ENCODE measurements at regions of chr3 and their contacts with region 1.

Region 1: DNA sequence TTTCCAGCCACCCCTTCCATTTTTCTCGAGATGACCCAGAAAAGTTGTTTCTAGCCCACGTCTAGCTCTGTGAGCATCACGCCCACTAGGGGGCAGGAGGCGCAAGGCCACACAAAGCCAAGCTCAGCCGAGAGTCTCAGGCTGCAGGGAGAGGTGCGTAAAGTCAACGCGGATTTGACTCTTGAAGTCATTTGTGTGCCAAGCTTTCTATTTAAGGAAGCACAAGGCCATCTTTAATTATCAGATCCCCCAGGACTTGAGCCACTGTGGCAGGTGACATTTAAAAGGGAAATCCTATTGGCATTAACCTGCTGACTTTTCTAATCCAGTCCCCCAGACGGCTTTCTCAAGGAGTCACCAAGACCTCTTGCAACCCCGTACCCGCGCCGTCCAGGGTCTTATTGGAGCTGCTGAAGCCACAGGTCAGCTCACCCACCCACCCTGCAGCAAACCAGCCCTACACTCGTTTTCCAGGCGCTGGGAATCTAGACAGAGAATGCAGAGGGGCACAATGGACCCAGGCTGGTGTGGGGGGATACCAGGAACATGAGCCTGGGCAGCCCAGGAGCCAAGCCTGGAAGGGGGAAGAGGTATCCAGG is 62.1 kb downstream of the CAPN7 start:
- DNase-seq: peak; percentile 93
- ATAC-seq: peak; percentile 63
- H3K4me3 Mint-ChIP-seq: no peak overlapping the region
- H3K27ac Mint-ChIP-seq: no peak overlapping the region
- H3K4me1 Mint-ChIP-seq: peaks cover 44% of the 10 kb centered on the region
- H3K27me3 Mint-ChIP-seq: peaks cover 7% of the 10 kb centered on the region
- CTCF ChIP-seq: peak; percentile 83

Region 2: DNA sequence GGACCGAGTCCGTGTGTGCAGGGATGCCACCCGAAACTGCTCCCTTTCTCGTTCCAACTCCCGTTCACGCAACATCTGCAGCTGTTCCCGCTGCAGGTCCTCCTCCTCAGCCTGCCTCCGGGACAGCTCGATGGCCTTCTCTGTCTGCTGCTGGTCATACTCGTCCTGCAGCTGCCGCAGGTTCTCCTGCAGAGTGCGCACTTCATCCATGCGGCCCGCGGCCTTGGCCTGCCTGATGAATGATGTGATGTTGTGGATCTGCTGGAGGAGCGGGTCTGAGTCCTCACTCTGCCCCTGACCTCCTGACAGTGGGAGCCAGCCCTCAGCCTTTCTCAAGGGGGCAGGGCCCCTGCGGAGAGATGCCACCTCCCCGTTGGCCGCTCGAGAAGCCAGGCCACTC is 193.6 kb before region 1 on chr3:
- CTCF ChIA-PET with region 1: no interaction called
- POLR2A ChIA-PET with region 1: no interaction called
- intact Hi-C with region 1: no loop called
- DNase-seq: no peak
- ATAC-seq: no peak
- H3K4me3 Mint-ChIP-seq: no peak overlapping the region
- H3K27ac Mint-ChIP-seq: no peak overlapping the region
- H3K4me1 Mint-ChIP-seq: no peaks in the 10 kb centered on the region
- H3K27me3 Mint-ChIP-seq: no peaks in the 10 kb centered on the region
- CTCF ChIP-seq: no peak

Region 3: GRCh38 chr3:15148614-15149013 is 119.5 kb before region 1 on chr3:
- CTCF ChIA-PET with region 1: no interaction called
- POLR2A ChIA-PET with region 1: no interaction called
- intact Hi-C with region 1: no loop called
- DNase-seq: peak; percentile 4
- ATAC-seq: peak; percentile 39
- H3K4me3 Mint-ChIP-seq: no peak overlapping the region
- H3K27ac Mint-ChIP-seq: no peak overlapping the region
- H3K4me1 Mint-ChIP-seq: no peaks in the 10 kb centered on the region
- H3K27me3 Mint-ChIP-seq: peaks cover 15% of the 10 kb centered on the region
- CTCF ChIP-seq: no peak

Region 4: DNA sequence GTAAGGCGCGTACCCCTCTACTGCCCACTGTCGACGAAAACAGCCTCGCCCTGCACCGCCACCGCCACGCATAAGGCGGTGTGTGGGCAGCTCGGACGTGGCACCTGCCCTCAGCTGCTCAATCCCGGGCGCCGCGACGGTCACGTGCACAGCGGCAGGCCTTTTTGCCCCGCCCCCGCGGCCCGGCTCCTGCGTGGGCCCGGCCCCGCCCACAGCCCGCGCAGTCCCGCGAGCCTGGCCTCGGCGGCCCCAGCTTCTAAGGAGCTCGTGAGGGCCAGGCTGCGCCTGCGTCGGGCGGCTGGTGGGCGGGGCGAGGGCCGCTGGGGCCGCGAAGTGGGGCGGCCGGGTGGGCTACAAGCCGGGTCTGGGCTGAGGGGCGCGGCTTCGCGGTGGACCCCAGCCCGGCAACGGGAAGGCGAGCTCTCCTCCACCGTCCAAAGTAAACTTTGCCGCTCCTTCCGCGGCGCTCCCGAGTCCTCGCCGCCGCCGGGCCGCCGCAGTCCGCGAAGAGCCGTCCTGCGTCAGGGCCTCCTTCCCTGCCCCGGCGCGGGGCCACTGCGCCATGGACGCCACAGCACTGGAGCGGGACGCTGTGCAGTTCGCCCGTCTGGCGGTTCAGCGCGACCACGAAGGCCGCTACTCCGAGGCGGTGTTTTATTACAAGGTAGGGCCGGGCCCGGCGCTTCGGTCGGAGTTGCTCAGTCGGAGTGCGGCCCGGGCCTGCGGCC is 62.0 kb before region 1 on chr3 and contains the start of gene CAPN7:
- CTCF ChIA-PET with region 1: interaction called, 80 read pairs
- POLR2A ChIA-PET with region 1: interaction called, 4 read pairs
- intact Hi-C with region 1: loop called (anchors 5 kb)
- DNase-seq: peak; percentile 94
- ATAC-seq: peak; percentile 90
- H3K4me3 Mint-ChIP-seq: peak within 1 kb of the TSS; percentile 78
- H3K27ac Mint-ChIP-seq: peak within 1 kb of the TSS; percentile 85
- H3K4me1 Mint-ChIP-seq: peaks cover 21% of the 10 kb centered on the region
- H3K27me3 Mint-ChIP-seq: no peaks in the 10 kb centered on the region
- CTCF ChIP-seq: no peak
- total RNA-seq, gene CAPN7: 22.2 to 27.5 TPM

Region 5: DNA sequence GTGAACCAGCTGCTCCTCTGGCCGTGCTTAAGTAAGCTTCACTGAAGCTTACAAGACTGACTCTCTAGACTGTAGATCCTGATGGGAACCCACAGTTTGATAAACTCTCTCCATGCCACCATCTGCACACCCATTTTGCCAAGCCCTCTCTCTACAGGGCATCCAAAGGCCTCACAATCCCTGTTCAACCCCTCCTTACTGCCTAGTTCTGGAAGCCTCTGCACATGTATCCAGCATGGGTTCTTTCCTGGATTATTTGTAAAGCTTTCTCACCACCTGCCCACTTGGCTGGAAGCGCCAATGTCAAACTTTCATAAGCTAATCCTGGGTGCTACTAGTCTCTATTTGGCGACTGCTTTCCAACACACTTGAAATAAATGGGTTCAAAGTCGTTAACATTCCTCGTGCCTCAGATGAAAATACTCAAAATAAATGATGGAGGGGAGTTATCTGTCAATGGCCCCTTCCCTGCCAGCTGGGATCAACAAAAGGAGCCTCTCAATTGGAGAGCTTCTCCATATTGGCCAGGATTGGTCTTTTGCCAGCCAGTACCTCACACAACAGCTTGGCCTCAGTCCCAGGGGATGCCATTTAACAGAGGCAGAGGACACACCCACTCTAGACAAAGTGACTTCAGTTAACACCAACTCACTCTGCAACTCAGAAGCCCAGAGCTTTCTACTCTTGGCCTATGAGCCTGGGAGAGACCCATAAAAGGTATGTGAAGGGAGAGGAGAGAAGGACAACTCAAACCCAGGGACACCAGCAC is 16.2 kb after region 1 on chr3:
- CTCF ChIA-PET with region 1: interaction called, 28 read pairs
- POLR2A ChIA-PET with region 1: interaction called, 5 read pairs
- intact Hi-C with region 1: no loop called
- DNase-seq: no peak
- ATAC-seq: no peak
- H3K4me3 Mint-ChIP-seq: no peak overlapping the region
- H3K27ac Mint-ChIP-seq: no peak overlapping the region
- H3K4me1 Mint-ChIP-seq: peaks cover 24% of the 10 kb centered on the region
- H3K27me3 Mint-ChIP-seq: no peaks in the 10 kb centered on the region
- CTCF ChIP-seq: no peak

Region 6: GRCh38 chr3:15319575-15319974 is 51.4 kb after region 1 on chr3:
- CTCF ChIA-PET with region 1: interaction called, 14 read pairs
- POLR2A ChIA-PET with region 1: no interaction called
- intact Hi-C with region 1: loop called (anchors 5 kb)
- DNase-seq: no peak
- ATAC-seq: no peak
- H3K4me3 Mint-ChIP-seq: no peak overlapping the region
- H3K27ac Mint-ChIP-seq: no peak overlapping the region
- H3K4me1 Mint-ChIP-seq: peaks cover 39% of the 10 kb centered on the region
- H3K27me3 Mint-ChIP-seq: no peaks in the 10 kb centered on the region
- CTCF ChIP-seq: no peak

Region 7: GRCh38 chr3:15342945-15343344 is 74.8 kb after region 1 on chr3:
- CTCF ChIA-PET with region 1: interaction called, 16 read pairs
- POLR2A ChIA-PET with region 1: interaction called, 3 read pairs
- intact Hi-C with region 1: no loop called
- DNase-seq: no peak
- ATAC-seq: no peak
- H3K4me3 Mint-ChIP-seq: no peak overlapping the region
- H3K27ac Mint-ChIP-seq: no peak overlapping the region
- H3K4me1 Mint-ChIP-seq: peaks cover 22% of the 10 kb centered on the region
- H3K27me3 Mint-ChIP-seq: no peaks in the 10 kb centered on the region
- CTCF ChIP-seq: no peak

Region 8: GRCh38 chr3:15377961-15378791 is 110.0 kb after region 1 on chr3:
- CTCF ChIA-PET with region 1: interaction called, 128 read pairs
- POLR2A ChIA-PET with region 1: interaction called, 3 read pairs
- intact Hi-C with region 1: loop called (anchors 1 kb)
- DNase-seq: peak; percentile 97
- ATAC-seq: peak; percentile 95
- H3K4me3 Mint-ChIP-seq: no peak overlapping the region
- H3K27ac Mint-ChIP-seq: peak overlapping the region; percentile 77
- H3K4me1 Mint-ChIP-seq: peaks cover 6% of the 10 kb centered on the region
- H3K27me3 Mint-ChIP-seq: no peaks in the 10 kb centered on the region
- CTCF ChIP-seq: peak; percentile 91

Region 9: GRCh38 chr3:15405448-15406050 is 137.4 kb after region 1 on chr3:
- CTCF ChIA-PET with region 1: interaction called, 117 read pairs
- POLR2A ChIA-PET with region 1: interaction called, 5 read pairs
- intact Hi-C with region 1: loop called (anchors 2 kb)
- DNase-seq: peak; percentile 35
- ATAC-seq: peak; percentile 67
- H3K4me3 Mint-ChIP-seq: no peak overlapping the region
- H3K27ac Mint-ChIP-seq: no peak overlapping the region
- H3K4me1 Mint-ChIP-seq: no peaks in the 10 kb centered on the region
- H3K27me3 Mint-ChIP-seq: no peaks in the 10 kb centered on the region
- CTCF ChIP-seq: peak; percentile 63

Measured in activated CD8-positive, alpha-beta T cell treated with anti-CD3 and anti-CD28 coated beads for 36 hours (primary cell).